Activated CD4-positive, alpha-beta memory T cell treated with anti-CD3 and anti-CD28 coated beads for 36 hours (primary cell): ENCODE measurements at regions of chr2 and their contacts with region 1.

Region 1: GRCh38 chr2:202634556-202635427 is at the start of gene FAM117B:
- DNase-seq: peak; percentile 99
- H3K4me3 Mint-ChIP-seq: peak within 1 kb of the TSS; percentile 95
- H3K27ac Mint-ChIP-seq: peak within 1 kb of the TSS; percentile 94
- H3K4me1 Mint-ChIP-seq: peaks cover 43% of the 10 kb centered on the region
- H3K27me3 Mint-ChIP-seq: no peaks in the 10 kb centered on the region
- total RNA-seq, gene FAM117B: 5.8 to 5.9 TPM

Region 2: GRCh38 chr2:202375609-202376408 is 259.0 kb before region 1 on chr2 and contains the start of gene BMPR2:
- CTCF ChIA-PET with region 1: interaction called, 3 read pairs
- POLR2A ChIA-PET with region 1: no interaction called
- intact Hi-C with region 1: loop called (anchors 5 kb)
- DNase-seq: peak; percentile 88
- H3K4me3 Mint-ChIP-seq: peak within 1 kb of the TSS; percentile 98
- H3K27ac Mint-ChIP-seq: peak within 1 kb of the TSS; percentile 80
- H3K4me1 Mint-ChIP-seq: peaks cover 24% of the 10 kb centered on the region
- H3K27me3 Mint-ChIP-seq: no peaks in the 10 kb centered on the region
- total RNA-seq, gene BMPR2: 8.2 to 8.7 TPM

Region 3: GRCh38 chr2:202671317-202672035 is 36.7 kb after region 1 on chr2:
- CTCF ChIA-PET with region 1: no interaction called
- POLR2A ChIA-PET with region 1: interaction called, 3 read pairs
- intact Hi-C with region 1: loop called (anchors 2 kb)
- DNase-seq: no peak
- H3K4me3 Mint-ChIP-seq: no peak overlapping the region
- H3K27ac Mint-ChIP-seq: no peak overlapping the region
- H3K4me1 Mint-ChIP-seq: peaks cover 63% of the 10 kb centered on the region
- H3K27me3 Mint-ChIP-seq: no peaks in the 10 kb centered on the region

Region 4: DNA sequence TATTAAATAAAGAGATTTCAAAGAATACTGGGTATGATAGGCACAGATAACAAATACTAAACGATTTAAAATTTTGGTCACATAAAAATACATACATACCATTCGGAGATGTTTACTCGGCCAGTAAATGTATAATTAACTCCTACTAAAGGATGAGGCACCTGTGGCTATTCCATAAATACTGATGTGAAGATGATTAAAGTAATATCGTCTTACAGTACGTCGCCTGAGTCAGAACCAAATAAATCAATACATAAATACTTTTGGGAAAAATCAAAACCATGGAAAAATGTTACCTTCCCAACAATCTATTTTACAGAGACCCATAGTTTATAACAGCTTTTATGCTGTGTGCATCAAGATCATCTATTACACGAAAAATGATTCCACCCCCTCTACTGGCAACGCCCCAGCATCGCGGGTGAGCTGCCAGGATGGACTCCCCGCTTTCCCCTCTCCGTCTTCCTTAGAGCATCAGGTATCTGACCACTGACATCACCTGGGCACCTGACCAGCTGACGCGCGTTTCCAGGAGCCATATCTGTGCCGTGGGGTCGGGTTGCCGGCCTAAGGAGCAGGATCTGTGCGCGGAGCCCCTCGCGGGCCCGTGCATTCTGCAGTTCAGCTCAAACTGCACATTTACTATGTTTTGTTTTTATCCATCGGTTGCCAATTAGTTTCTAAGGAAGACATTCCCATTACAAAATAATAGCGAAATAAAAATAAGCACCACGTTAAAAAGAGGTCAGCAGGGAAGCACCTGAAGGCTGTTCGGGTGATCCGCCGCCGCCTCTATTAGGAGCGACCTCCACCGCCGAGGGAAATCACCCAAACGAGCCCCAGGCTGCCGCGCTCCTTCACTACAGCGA is 235.9 kb after region 1 on chr2:
- CTCF ChIA-PET with region 1: interaction called, 3 read pairs
- POLR2A ChIA-PET with region 1: interaction called, 5 read pairs
- intact Hi-C with region 1: loop called (anchors 2 kb)
- DNase-seq: peak; percentile 81
- H3K4me3 Mint-ChIP-seq: peak overlapping the region; percentile 88
- H3K27ac Mint-ChIP-seq: peak overlapping the region; percentile 61
- H3K4me1 Mint-ChIP-seq: peaks cover 7% of the 10 kb centered on the region
- H3K27me3 Mint-ChIP-seq: no peaks in the 10 kb centered on the region

Region 5: GRCh38 chr2:203238704-203239526 is 604.1 kb after region 1 on chr2 and contains the start of gene CYP20A1:
- CTCF ChIA-PET with region 1: no interaction called
- POLR2A ChIA-PET with region 1: no interaction called
- intact Hi-C with region 1: loop called (anchors 5 kb)
- DNase-seq: peak; percentile 98
- H3K4me3 Mint-ChIP-seq: peak within 1 kb of the TSS; percentile 86
- H3K27ac Mint-ChIP-seq: peak within 1 kb of the TSS; percentile 94
- H3K4me1 Mint-ChIP-seq: peaks cover 32% of the 10 kb centered on the region
- H3K27me3 Mint-ChIP-seq: no peaks in the 10 kb centered on the region
- total RNA-seq, gene CYP20A1: 22.1 to 24.4 TPM